Naive thymus-derived CD4-positive, alpha-beta T cell (primary cell): ENCODE measurements at regions of chr3 and their contacts with region 1.

Region 1: DNA sequence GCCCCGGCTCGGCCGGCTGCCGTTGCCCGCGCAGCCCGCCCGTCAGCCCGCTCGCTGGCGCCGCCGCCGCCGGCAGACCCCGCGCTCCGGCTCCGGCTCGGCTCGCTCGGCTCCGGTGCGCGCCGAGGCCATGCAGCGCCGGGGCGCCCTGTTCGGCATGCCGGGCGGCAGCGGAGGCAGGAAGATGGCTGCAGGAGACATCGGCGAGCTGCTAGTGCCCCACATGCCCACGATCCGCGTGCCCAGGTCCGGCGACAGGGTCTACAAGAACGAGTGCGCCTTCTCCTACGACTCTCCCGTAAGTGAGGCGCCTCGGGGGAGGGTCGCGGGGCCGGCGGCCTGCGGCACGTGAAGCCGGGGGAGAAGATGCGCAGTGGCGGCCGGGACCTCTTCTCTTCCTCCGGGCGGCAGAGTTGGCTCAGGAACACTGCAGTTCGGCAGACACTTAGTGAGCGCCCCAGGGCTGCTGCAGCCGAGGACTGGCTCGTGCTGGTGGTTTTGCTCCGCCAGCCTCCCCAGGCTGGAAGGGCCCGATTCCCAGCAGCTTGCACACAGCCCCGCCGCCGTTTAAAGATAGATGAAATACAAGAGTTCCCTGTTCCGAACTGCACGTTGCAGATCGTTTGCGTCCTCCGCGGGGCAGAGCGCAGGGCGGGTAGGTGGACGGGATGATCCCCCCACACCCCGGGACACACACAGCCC is 407 bp downstream of the USP13 start:
- DNase-seq: peak; percentile 46 to 74 (median 71)
- ATAC-seq: peak; percentile 71
- H3K4me3 ChIP-seq: peak overlapping the region; percentile 83
- H3K4me3 Mint-ChIP-seq: peak overlapping the region; percentile 87 to 98 (median 94)
- H3K27ac ChIP-seq: peak overlapping the region; percentile 74
- H3K27ac Mint-ChIP-seq: peak overlapping the region; percentile 84 to 90 (median 87)
- H3K4me1 ChIP-seq: peaks cover 0 to 7% of the 10 kb centered on the region in 2 donors
- H3K4me1 Mint-ChIP-seq: peaks cover 20 to 55% (median 41%) of the 10 kb centered on the region in 7 donors
- H3K27me3 ChIP-seq: no peaks in the 10 kb centered on the region
- H3K27me3 Mint-ChIP-seq: peaks cover 0 to 19% (median 0%) of the 10 kb centered on the region in 5 donors

Region 2: DNA sequence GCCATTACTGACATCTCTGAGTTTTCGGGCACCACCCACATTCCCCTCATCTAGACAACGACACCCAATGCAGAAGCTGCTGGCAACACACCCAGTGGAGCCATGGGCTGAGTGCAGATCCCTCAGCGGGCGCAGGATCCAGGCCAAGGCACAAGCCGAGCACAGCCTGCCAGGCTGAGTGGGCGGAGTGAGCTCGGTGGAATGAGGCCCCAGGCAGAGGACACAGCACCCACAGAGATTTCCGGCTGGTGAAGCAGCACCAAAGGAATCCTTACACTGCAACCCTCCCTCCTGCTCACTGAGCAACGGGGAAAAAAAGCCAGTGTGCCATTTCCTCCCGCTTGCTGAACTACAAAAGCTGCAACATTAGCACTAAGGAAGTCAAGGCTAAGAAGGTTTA is 615.9 kb before region 1 on chr3:
- CTCF ChIA-PET with region 1: no interaction called
- POLR2A ChIA-PET with region 1: no interaction called
- intact Hi-C with region 1: loop called in 1 of 2 experiments (anchors 5 kb)
- DNase-seq: peak in 8 of 9 donors; percentile 62 to 81 (median 76)
- ATAC-seq: peak; percentile 95
- H3K4me3 ChIP-seq: peak overlapping the region; percentile 44
- H3K4me3 Mint-ChIP-seq: peak overlapping the region in 4 of 10 donors; percentile 55 to 79 (median 70)
- H3K27ac ChIP-seq: peak overlapping the region; percentile 69
- H3K27ac Mint-ChIP-seq: peak overlapping the region in 1 of 9 donors; percentile 79
- H3K4me1 ChIP-seq: peaks cover 11 to 33% of the 10 kb centered on the region in 2 donors
- H3K4me1 Mint-ChIP-seq: peaks cover 9 to 19% (median 17%) of the 10 kb centered on the region in 7 donors
- H3K27me3 ChIP-seq: no peaks in the 10 kb centered on the region
- H3K27me3 Mint-ChIP-seq: no peaks in the 10 kb centered on the region

Region 3: DNA sequence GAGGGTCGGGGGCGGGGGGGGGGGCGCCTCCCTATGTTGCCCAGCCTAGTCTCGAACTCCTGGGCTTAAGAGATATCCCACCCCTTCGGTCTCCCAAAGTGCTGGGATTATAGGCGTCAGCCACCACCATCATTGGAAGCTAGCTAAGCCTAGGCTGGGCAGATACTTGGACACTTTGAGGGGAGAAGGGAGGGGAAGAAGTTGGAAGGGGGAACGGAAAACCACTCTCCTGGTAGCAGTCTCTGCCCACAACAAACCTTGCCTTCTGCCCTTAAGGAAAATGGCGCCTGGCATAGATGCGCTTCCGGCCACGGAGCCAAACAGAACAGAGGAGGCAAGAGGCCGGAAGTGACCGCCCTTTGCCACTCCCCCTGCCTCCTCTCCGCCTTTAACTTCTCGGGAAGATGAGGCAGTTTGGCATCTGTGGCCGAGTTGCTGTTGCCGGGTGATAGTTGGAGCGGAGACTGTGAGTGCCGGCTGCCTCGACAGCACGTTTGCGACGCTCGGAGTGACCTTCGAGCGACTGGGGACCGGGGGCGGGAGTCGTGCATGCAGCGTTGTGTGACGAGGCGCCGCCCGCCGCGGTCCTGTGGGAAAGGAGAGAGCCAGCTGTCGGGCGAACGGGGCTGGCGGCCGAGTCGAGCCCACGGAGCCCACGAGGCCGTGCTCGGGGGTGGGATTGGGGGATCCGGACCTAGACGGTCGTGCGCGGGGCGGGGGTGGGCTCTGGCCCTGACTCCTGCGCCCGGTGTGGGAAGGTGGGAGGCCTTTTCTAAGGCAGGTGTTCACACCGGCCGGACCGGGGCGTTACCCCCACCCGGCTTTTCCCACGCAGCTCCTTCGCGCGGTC is 305.7 kb before region 1 on chr3 and contains the start of gene MFN1:
- CTCF ChIA-PET with region 1: no interaction called
- POLR2A ChIA-PET with region 1: no interaction called
- intact Hi-C with region 1: loop called (anchors 5 kb)
- DNase-seq: peak; percentile 69 to 91 (median 88)
- ATAC-seq: peak; percentile 99
- H3K4me3 ChIP-seq: peak within 1 kb of the TSS; percentile 99
- H3K4me3 Mint-ChIP-seq: peak within 1 kb of the TSS; percentile 97 to 100 (median 98)
- H3K27ac ChIP-seq: peak within 1 kb of the TSS; percentile 81
- H3K27ac Mint-ChIP-seq: peak within 1 kb of the TSS; percentile 84 to 98 (median 94)
- H3K4me1 ChIP-seq: peaks cover 8 to 13% of the 10 kb centered on the region in 2 donors
- H3K4me1 Mint-ChIP-seq: peaks cover 7 to 39% (median 28%) of the 10 kb centered on the region in 7 donors
- H3K27me3 ChIP-seq: no peaks in the 10 kb centered on the region
- H3K27me3 Mint-ChIP-seq: no peaks in the 10 kb centered on the region
- total RNA-seq, gene MFN1: 32.2 to 58.1 (median 40.3) TPM

Region 4: DNA sequence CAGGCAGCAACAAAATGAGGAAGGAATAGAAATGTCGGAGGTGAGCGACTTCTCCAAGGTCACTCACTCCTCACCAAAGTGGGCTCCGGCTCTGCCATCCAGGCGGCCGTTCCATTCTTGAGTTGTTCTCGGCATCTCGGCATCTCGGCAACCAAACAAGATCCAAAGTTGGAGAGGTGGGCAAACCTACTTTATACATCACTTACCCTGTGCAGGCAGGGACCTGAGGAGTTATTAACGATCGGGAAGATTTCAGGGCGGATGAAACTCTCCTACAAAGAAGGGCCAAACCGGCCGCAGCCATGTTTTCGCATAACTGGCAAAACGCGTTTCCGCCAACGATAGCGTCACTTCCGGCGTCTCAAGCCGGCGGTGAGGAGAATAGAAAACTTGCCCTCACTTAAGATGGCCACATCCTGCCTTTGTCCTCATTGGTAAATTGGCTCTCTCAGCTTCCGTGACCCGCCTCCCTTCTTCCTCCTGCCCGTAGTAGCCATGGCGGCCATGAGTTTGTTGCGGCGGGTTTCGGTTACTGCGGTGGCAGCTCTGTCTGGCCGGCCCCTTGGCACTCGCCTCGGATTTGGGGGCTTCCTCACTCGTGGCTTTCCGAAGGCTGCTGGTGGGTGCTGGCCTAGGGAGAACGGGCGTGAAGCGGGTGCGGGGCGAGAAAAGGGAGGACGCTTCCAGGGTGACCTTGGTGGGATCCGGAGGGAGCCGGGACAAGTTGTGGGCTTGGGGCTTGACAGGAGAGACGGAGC is 48.7 kb before region 1 on chr3 and contains the starts of genes MRPL47 and NDUFB5:
- CTCF ChIA-PET with region 1: no interaction called
- POLR2A ChIA-PET with region 1: interaction called, 3 read pairs
- intact Hi-C with region 1: loop called (anchors 1 kb)
- DNase-seq: peak; percentile 76 to 95 (median 92)
- ATAC-seq: peak; percentile 100
- H3K4me3 ChIP-seq: peak within 1 kb of the TSS; percentile 95
- H3K4me3 Mint-ChIP-seq: peak within 1 kb of the TSS; percentile 95 to 99 (median 99)
- H3K27ac ChIP-seq: peak within 1 kb of the TSS; percentile 90
- H3K27ac Mint-ChIP-seq: peak within 1 kb of the TSS; percentile 98 to 100 (median 99)
- H3K4me1 ChIP-seq: peaks cover 15 to 25% of the 10 kb centered on the region in 2 donors
- H3K4me1 Mint-ChIP-seq: peaks cover 23 to 65% (median 46%) of the 10 kb centered on the region in 7 donors
- H3K27me3 ChIP-seq: no peaks in the 10 kb centered on the region
- H3K27me3 Mint-ChIP-seq: no peaks in the 10 kb centered on the region
- total RNA-seq, gene MRPL47: 14.4 to 41.4 (median 18.5) TPM
- total RNA-seq, gene NDUFB5: 33.4 to 80.2 (median 62.8) TPM

Region 5: GRCh38 chr3:179921500-179921899 is 268.3 kb after region 1 on chr3:
- CTCF ChIA-PET with region 1: no interaction called
- POLR2A ChIA-PET with region 1: no interaction called
- intact Hi-C with region 1: no loop called
- DNase-seq: no peak
- ATAC-seq: no peak
- H3K4me3 ChIP-seq: no peak overlapping the region
- H3K4me3 Mint-ChIP-seq: no peak overlapping the region
- H3K27ac ChIP-seq: no peak overlapping the region
- H3K27ac Mint-ChIP-seq: no peak overlapping the region
- H3K4me1 ChIP-seq: no peaks in the 10 kb centered on the region
- H3K4me1 Mint-ChIP-seq: no peaks in the 10 kb centered on the region
- H3K27me3 ChIP-seq: no peaks in the 10 kb centered on the region
- H3K27me3 Mint-ChIP-seq: peaks cover 8 to 21% (median 16%) of the 10 kb centered on the region in 5 donors

Region 6: GRCh38 chr3:179949412-179949811 is 296.2 kb after region 1 on chr3:
- CTCF ChIA-PET with region 1: no interaction called
- POLR2A ChIA-PET with region 1: no interaction called
- intact Hi-C with region 1: loop called in 1 of 2 experiments (anchors 10 kb)
- DNase-seq: no peak
- ATAC-seq: no peak
- H3K4me3 ChIP-seq: no peak overlapping the region
- H3K4me3 Mint-ChIP-seq: no peak overlapping the region
- H3K27ac ChIP-seq: no peak overlapping the region
- H3K27ac Mint-ChIP-seq: no peak overlapping the region
- H3K4me1 ChIP-seq: no peaks in the 10 kb centered on the region
- H3K4me1 Mint-ChIP-seq: peaks cover 0 to 5% (median 0%) of the 10 kb centered on the region in 7 donors
- H3K27me3 ChIP-seq: no peaks in the 10 kb centered on the region
- H3K27me3 Mint-ChIP-seq: peaks cover 6 to 42% (median 15%) of the 10 kb centered on the region in 5 donors

Region 7: DNA sequence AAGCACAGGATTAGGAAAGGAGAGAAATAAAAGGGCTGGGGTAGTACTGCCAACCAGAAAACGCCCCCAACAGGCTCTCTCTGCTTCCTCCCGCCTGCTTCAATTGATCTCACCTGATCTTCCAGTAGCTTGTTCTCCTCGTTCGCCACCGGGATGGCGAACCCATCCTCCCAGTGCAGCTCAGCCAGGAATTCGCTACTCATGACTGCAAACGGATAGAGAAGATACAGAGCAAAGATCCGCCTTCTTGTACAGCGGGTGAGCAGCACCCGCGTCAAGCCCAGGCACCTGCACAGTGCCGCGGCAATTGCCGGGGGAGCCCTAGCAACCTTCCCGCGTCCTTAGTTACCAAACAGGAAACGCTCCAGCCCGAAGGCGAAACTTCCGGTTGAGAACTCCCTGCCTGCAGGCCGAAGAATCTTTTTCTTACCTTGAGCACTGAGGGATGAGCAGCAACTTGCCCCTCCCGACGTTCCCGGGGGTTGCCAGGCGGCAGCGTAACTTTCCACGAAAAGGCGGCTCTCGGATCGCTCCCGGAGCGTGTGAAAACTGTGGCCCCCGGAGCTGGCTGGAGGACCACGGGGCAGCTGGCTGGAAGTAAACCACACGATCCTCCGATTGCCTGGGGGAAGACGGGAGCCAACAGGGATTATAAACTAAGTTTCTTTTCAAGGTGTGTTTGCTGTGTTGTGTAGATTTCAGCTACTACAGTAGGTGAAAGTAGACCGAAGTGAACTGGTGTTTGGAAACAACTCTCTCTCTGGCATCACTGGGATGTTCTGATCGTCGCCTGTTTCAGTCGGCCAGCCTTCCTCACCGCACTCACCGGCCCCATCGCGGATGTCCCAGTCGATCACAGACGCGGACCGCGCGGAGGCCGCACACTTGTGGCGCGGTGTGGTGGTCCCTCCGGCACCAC is 1026.2 kb after region 1 on chr3 and contains the start of gene CCDC39:
- CTCF ChIA-PET with region 1: no interaction called
- POLR2A ChIA-PET with region 1: no interaction called
- intact Hi-C with region 1: loop called in 1 of 2 experiments (anchors 5 kb)
- DNase-seq: peak; percentile 12 to 62 (median 47)
- ATAC-seq: peak; percentile 80
- H3K4me3 ChIP-seq: peak within 1 kb of the TSS; percentile 72
- H3K4me3 Mint-ChIP-seq: peak within 1 kb of the TSS; percentile 84 to 94 (median 89)
- H3K27ac ChIP-seq: peak within 1 kb of the TSS; percentile 49
- H3K27ac Mint-ChIP-seq: peak within 1 kb of the TSS in 8 of 9 donors; percentile 21 to 80 (median 68)
- H3K4me1 ChIP-seq: peaks cover 9 to 12% of the 10 kb centered on the region in 2 donors
- H3K4me1 Mint-ChIP-seq: peaks cover 14 to 25% (median 18%) of the 10 kb centered on the region in 7 donors
- H3K27me3 ChIP-seq: peaks cover 0 to 3% of the 10 kb centered on the region in 2 donors
- H3K27me3 Mint-ChIP-seq: peaks cover 45 to 66% (median 57%) of the 10 kb centered on the region in 5 donors
- total RNA-seq, gene CCDC39: not detected